ENCODE measurements at regions of chr11 and their contacts with region 1.

Region 1: GRCh38 chr11:117946842-117947526 is 17.8 kb upstream of the TMPRSS13 start:
- DNase-seq: peak; percentile 88
- H3K4me3 ChIP-seq: no peak overlapping the region
- H3K27ac ChIP-seq: peak overlapping the region; percentile 9
- H3K4me1 ChIP-seq: peaks cover 18% of the 10 kb centered on the region
- H3K27me3 ChIP-seq: peaks cover 4 to 9% of the 10 kb centered on the region in 2 experiments
- CTCF ChIP-seq: peak; percentile 91 to 94
- POLR2A ChIP-seq: no peak

Region 2: GRCh38 chr11:117426269-117426685 is 520.7 kb before region 1 on chr11:
- CTCF ChIA-PET with region 1: interaction called, 40 read pairs
- POLR2A ChIA-PET with region 1: no interaction called
- dilution Hi-C with region 1: no loop called
- intact Hi-C with region 1: loop called (anchors 2 kb)
- DNase-seq: peak; percentile 46
- H3K4me3 ChIP-seq: no peak overlapping the region
- H3K27ac ChIP-seq: no peak overlapping the region
- H3K4me1 ChIP-seq: no peaks in the 10 kb centered on the region
- H3K27me3 ChIP-seq: no peaks in the 10 kb centered on the region
- CTCF ChIP-seq: peak; percentile 93 to 96
- POLR2A ChIP-seq: no peak

Region 3: GRCh38 chr11:117771197-117771596 is 175.8 kb before region 1 on chr11:
- CTCF ChIA-PET with region 1: no interaction called
- POLR2A ChIA-PET with region 1: no interaction called
- dilution Hi-C with region 1: no loop called
- intact Hi-C with region 1: no loop called
- DNase-seq: no peak
- H3K4me3 ChIP-seq: no peak overlapping the region
- H3K27ac ChIP-seq: no peak overlapping the region
- H3K4me1 ChIP-seq: no peaks in the 10 kb centered on the region
- H3K27me3 ChIP-seq: no peaks in the 10 kb centered on the region
- CTCF ChIP-seq: no peak
- POLR2A ChIP-seq: no peak

Region 4: GRCh38 chr11:117817368-117818040 is 129.5 kb before region 1 on chr11:
- CTCF ChIA-PET with region 1: interaction called, 520 read pairs
- POLR2A ChIA-PET with region 1: interaction called, 4 read pairs
- dilution Hi-C with region 1: no loop called
- intact Hi-C with region 1: loop called (anchors 1 kb)
- DNase-seq: peak; percentile 88
- H3K4me3 ChIP-seq: no peak overlapping the region
- H3K27ac ChIP-seq: peak overlapping the region; percentile 65
- H3K4me1 ChIP-seq: peaks cover 15% of the 10 kb centered on the region
- H3K27me3 ChIP-seq: peaks cover 0 to 1% of the 10 kb centered on the region in 2 experiments
- CTCF ChIP-seq: peak; percentile 98 to 99
- POLR2A ChIP-seq: no peak

Region 5: GRCh38 chr11:117861151-117862018 is 85.6 kb before region 1 on chr11:
- CTCF ChIA-PET with region 1: interaction called, 10 read pairs
- POLR2A ChIA-PET with region 1: no interaction called
- dilution Hi-C with region 1: no loop called
- intact Hi-C with region 1: no loop called
- DNase-seq: peak; percentile 15
- H3K4me3 ChIP-seq: no peak overlapping the region
- H3K27ac ChIP-seq: no peak overlapping the region
- H3K4me1 ChIP-seq: peaks cover 6% of the 10 kb centered on the region
- H3K27me3 ChIP-seq: no peaks in the 10 kb centered on the region
- CTCF ChIP-seq: no peak
- POLR2A ChIP-seq: no peak

Region 6: DNA sequence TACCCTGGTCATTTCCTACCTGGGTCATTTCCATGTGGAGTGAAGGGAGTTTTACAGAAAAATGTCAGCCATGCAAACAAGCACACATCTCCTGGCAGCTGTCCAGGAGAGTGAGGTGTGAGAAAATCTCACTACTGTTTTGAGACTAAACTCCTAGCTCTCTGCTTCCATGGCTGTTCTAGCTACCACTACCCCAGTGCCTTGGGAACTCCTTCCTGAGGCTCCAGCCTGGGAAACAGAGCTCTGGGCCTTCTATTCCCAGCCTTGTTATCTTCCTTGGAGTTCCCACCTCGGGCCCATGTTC is 15.0 kb before region 1 on chr11:
- CTCF ChIA-PET with region 1: interaction called, 25 read pairs
- POLR2A ChIA-PET with region 1: no interaction called
- dilution Hi-C with region 1: no loop called
- intact Hi-C with region 1: no loop called
- DNase-seq: no peak
- H3K4me3 ChIP-seq: no peak overlapping the region
- H3K27ac ChIP-seq: no peak overlapping the region
- H3K4me1 ChIP-seq: no peaks in the 10 kb centered on the region
- H3K27me3 ChIP-seq: peaks cover 2 to 8% of the 10 kb centered on the region in 2 experiments
- CTCF ChIP-seq: no peak
- POLR2A ChIP-seq: no peak

Region 7: GRCh38 chr11:117979481-117980211 is 32.7 kb after region 1 on chr11:
- CTCF ChIA-PET with region 1: interaction called, 16 read pairs
- POLR2A ChIA-PET with region 1: no interaction called
- dilution Hi-C with region 1: no loop called
- intact Hi-C with region 1: no loop called
- DNase-seq: no peak
- H3K4me3 ChIP-seq: no peak overlapping the region
- H3K27ac ChIP-seq: no peak overlapping the region
- H3K4me1 ChIP-seq: no peaks in the 10 kb centered on the region
- H3K27me3 ChIP-seq: peaks cover 7 to 8% of the 10 kb centered on the region in 2 experiments
- CTCF ChIP-seq: no peak
- POLR2A ChIP-seq: no peak